MCF 10A (cell line): ENCODE measurements at regions of chr7 and their contacts with region 1.

Region 1: DNA sequence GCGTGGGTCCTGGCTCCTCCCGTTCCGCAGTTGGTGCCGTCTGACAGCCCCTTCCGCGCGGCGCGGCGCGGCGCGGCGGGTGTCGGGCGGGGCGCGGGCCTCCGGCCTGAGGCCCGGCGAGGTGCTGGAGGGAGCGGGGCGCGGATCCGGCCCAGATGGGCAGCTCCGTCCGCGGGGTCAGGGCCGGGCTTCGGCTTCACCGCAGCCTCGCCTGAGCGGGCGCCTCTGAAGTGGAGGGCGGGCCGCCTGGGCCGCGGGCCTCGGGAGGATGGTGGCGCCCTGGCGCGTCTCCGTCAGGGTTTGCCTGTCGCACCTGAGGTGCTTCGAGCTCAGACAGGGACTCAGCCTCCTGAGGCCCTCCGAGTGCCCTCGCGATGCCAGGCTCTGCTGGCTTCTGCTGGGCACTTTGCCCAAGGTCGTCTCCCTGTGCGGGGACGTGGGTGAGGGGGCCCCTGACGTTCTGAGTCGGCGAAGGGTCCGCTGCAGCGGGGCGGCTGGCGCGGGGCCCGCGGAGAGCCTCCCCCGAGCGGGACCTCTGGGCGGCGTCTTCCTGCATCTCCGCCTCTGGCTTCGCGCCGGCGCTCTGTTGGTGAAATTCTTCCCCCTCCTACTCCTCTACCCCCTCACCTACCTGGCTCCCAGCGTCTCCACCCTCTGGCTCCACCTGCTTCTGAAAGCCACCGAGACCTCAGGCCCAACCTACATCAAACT is 473 bp downstream of the ADCK2 start:
- DNase-seq: peak; percentile 56
- H3K4me3 Mint-ChIP-seq: peak overlapping the region; percentile 87
- H3K27ac Mint-ChIP-seq: peak overlapping the region; percentile 79
- H3K4me1 Mint-ChIP-seq: peaks cover 14% of the 10 kb centered on the region
- H3K27me3 Mint-ChIP-seq: no peaks in the 10 kb centered on the region
- CTCF ChIP-seq: no peak

Region 2: DNA sequence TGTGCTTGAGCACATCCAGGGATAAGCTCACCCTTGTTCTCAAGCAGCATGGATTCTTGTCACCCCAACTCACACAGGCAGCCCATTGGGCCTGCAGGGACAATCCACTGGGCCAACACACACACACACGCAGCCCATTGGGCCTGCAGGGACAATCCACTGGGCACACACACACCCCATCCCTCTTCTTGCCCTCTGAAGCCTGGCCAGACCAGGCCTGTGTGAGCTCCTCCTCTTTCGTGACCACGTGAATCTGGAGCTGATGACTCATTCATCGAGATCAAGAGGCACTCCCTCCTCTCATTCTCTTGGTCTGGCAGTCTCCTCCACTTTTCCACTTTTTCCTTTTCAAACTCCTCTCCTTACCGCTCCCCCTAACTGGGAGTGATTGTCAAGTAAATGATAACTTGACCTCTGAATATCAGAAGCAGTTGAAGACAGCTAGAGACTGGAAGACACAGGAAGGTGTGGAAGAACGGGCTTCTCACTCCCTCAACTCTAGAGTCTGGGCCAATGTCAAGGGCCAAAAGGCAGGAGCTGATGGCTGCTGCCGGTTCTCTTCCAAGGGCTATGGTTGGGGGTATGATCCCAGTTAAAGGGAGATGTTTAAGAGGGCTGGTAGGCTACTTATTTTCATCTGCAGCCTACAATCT is 985.1 kb before region 1 on chr7:
- CTCF ChIA-PET with region 1: no interaction called
- POLR2A ChIA-PET with region 1: no interaction called
- intact Hi-C with region 1: no loop called
- DNase-seq: peak; percentile 66
- H3K4me3 Mint-ChIP-seq: no peak overlapping the region
- H3K27ac Mint-ChIP-seq: peak overlapping the region; percentile 21
- H3K4me1 Mint-ChIP-seq: peaks cover 26% of the 10 kb centered on the region
- H3K27me3 Mint-ChIP-seq: no peaks in the 10 kb centered on the region
- CTCF ChIP-seq: no peak

Region 3: DNA sequence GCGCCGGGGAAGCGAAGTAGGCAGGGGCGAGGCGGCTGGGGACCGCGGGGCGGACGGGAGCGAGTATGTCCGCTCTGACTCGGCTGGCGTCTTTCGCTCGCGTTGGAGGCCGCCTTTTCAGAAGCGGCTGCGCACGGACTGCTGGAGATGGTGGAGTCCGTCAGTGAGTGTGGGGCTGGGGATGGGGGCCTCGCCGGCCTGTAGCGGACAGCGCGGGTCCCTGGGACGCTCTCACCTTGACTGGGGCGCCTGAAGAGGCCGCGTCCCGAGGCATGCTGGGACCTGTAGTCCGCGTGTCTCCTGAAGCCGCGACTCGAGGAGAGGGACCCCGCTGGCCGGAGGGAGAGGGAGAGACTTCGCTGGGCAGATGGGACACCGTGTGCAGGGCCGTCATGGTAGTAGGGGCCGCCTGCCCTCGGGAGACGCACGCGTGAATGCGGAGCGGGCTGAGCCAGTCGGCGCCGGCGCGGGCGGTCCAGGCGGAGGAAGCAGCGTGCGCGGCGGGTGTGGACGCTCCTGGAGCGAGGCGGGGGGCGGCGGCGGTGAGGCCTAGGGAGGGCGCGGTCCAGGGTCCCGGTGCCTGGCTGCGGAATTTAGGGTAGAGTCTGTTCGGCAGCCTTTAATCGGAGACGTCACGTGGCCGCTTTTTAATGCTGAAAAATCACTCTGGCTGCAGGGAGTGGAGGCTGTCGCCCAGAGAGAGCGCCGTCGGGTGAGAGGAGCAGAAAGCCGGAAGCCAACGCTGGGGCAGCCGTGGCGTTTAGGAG is 23.6 kb after region 1 on chr7 and contains the start of gene NDUFB2:
- CTCF ChIA-PET with region 1: interaction called, 3 read pairs
- POLR2A ChIA-PET with region 1: interaction called, 15 read pairs
- intact Hi-C with region 1: no loop called
- DNase-seq: peak; percentile 83
- H3K4me3 Mint-ChIP-seq: peak within 1 kb of the TSS; percentile 86
- H3K27ac Mint-ChIP-seq: peak within 1 kb of the TSS; percentile 94
- H3K4me1 Mint-ChIP-seq: peaks cover 20% of the 10 kb centered on the region
- H3K27me3 Mint-ChIP-seq: no peaks in the 10 kb centered on the region
- CTCF ChIP-seq: no peak
- total RNA-seq, gene NDUFB2: 166 and 189 TPM in 2 replicates

Region 4: GRCh38 chr7:141975806-141976523 is 1302.7 kb after region 1 on chr7:
- CTCF ChIA-PET with region 1: no interaction called
- POLR2A ChIA-PET with region 1: no interaction called
- intact Hi-C with region 1: no loop called
- DNase-seq: peak; percentile 85
- H3K4me3 Mint-ChIP-seq: peak overlapping the region; percentile 60
- H3K27ac Mint-ChIP-seq: peak overlapping the region; percentile 9
- H3K4me1 Mint-ChIP-seq: no peaks in the 10 kb centered on the region
- H3K27me3 Mint-ChIP-seq: no peaks in the 10 kb centered on the region
- CTCF ChIP-seq: peak; percentile 92